Right cardiac atrium (tissue), 5 donors: ENCODE measurements at regions of chr1 and their contacts with region 1.

Region 1: GRCh38 chr1:175481126-175482066 is 262.0 kb downstream of the TNR start:
- DNase-seq: no peak
- ATAC-seq: peak; percentile 22 to 56
- H3K4me3 ChIP-seq: no peak overlapping the region
- H3K27ac ChIP-seq: no peak overlapping the region
- H3K4me1 ChIP-seq: no peaks in the 10 kb centered on the region
- H3K27me3 ChIP-seq: no peaks in the 10 kb centered on the region

Region 2: GRCh38 chr1:175536368-175536767 is 55.0 kb after region 1 on chr1:
- intact Hi-C with region 1: no loop called
- DNase-seq: no peak
- ATAC-seq: peak; percentile 16 to 78
- H3K4me3 ChIP-seq: no peak overlapping the region
- H3K27ac ChIP-seq: no peak overlapping the region
- H3K4me1 ChIP-seq: no peaks in the 10 kb centered on the region
- H3K27me3 ChIP-seq: no peaks in the 10 kb centered on the region

Region 3: GRCh38 chr1:175742790-175743459 is 261.5 kb after region 1 on chr1:
- intact Hi-C with region 1: loop called in 1 of 4 experiments (anchors 10 kb)
- DNase-seq: no peak
- ATAC-seq: no peak
- H3K4me3 ChIP-seq: no peak overlapping the region
- H3K27ac ChIP-seq: no peak overlapping the region
- H3K4me1 ChIP-seq: no peaks in the 10 kb centered on the region
- H3K27me3 ChIP-seq: no peaks in the 10 kb centered on the region

Region 4: DNA sequence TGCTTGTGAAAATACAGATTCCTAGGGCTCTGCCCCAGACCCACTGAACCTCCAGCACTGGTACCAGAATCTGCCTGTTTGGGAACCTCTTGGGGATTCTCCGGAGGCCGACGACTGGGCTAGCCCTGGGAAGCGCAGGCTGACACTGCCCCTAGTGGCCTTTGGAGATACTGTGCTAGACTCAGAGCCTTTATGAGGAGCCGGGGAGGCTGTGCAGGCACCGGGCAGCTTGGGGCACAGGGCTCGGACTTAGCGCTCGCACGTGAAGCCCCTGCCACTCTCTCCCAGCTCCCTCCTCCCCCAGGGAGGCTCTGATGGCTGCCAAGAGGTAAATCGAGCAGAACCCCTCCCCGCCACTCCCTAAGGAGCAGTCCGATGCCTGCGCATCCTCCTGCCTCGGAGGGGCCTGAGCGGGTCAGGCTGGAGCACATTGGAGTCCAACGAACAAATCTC is 406.6 kb after region 1 on chr1:
- intact Hi-C with region 1: loop called in 2 of 4 experiments (anchors 5 to 10 kb)
- DNase-seq: peak; percentile 64 to 78 (median 74)
- ATAC-seq: peak; percentile 88 to 91
- H3K4me3 ChIP-seq: no peak overlapping the region
- H3K27ac ChIP-seq: no peak overlapping the region
- H3K4me1 ChIP-seq: no peaks in the 10 kb centered on the region
- H3K27me3 ChIP-seq: no peaks in the 10 kb centered on the region